ENCODE measurements at regions of chr4 and their contacts with region 1.

Region 1: DNA sequence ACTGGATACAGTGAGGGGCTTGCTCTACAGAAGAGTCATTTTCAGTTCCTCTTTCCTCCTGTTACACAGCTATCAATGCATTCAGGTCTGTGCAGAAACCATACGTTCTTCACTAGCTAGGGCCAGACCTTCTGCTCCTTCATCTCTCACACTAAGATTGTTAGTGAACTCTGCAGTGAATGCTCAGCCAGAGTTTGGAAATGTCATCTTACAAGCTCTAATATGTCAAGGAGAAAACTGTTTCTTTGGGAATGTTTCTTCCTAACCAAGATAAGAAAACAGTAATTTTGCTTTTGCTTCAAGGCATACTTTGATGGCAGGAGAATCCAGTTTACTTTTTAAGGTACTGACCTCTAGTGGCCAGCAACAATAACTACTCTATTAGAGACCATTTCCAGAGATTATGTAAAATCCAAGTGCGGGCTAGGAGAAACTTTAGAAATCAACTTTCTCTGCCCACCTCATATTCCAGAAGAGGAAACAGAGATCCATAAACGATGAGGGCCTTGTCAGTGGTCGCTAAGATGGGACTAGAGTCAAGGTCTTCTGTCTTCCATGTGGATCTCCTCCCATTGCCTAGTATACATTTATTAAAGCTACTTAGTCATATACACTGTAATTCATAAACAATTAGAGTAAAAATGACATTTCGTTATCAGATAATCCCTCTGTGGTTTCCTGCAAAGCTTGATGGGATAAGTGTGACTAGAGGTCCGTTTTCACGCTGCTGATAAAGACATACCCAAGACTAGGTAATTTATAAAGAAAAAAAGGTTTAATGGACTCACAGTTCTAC is 12.1 kb upstream of the CC2D2A start:
- DNase-seq: no peak
- H3K4me3 ChIP-seq: no peak overlapping the region
- H3K27ac ChIP-seq: no peak overlapping the region
- H3K4me1 ChIP-seq: peaks cover 4% of the 10 kb centered on the region
- H3K27me3 ChIP-seq: peaks cover 2% of the 10 kb centered on the region
- CTCF ChIP-seq: peak; percentile 66 to 72

Region 2: GRCh38 chr4:15231265-15232091 is 226.1 kb before region 1 on chr4:
- CTCF ChIA-PET with region 1: no interaction called
- dilution Hi-C with region 1: loop called (anchors 25 kb)
- in situ Hi-C with region 1: loop called (anchors 5 kb)
- intact Hi-C with region 1: loop called (anchors 2 kb)
- DNase-seq: peak; percentile 68
- H3K4me3 ChIP-seq: no peak overlapping the region
- H3K27ac ChIP-seq: no peak overlapping the region
- H3K4me1 ChIP-seq: peaks cover 30% of the 10 kb centered on the region
- H3K27me3 ChIP-seq: peaks cover 2% of the 10 kb centered on the region
- CTCF ChIP-seq: peak; percentile 69 to 76

Region 3: DNA sequence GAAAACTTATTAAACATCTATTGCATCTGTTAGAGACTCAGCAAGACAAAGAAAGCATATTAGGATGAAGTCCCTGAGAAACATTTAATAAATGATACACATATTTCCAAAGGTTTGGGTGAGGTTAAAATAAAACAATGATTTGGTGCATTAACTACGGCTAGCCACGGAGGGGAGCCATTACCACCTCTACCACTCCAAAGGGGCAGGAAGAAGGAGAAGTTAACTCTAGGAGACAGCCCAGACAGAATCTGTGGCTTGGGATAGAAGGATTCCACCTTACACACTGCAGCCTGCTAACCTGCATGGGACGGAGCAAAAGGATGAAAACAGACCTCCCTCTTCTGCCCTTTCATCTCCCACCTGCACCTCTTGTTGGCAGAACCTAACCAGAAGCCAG is 218.9 kb before region 1 on chr4:
- CTCF ChIA-PET with region 1: interaction called, 3 read pairs
- dilution Hi-C with region 1: loop called (anchors 25 kb)
- in situ Hi-C with region 1: loop called (anchors 5 kb)
- intact Hi-C with region 1: loop called (anchors 1 kb)
- DNase-seq: peak; percentile 25
- H3K4me3 ChIP-seq: no peak overlapping the region
- H3K27ac ChIP-seq: no peak overlapping the region
- H3K4me1 ChIP-seq: peaks cover 13% of the 10 kb centered on the region
- H3K27me3 ChIP-seq: no peaks in the 10 kb centered on the region
- CTCF ChIP-seq: peak; percentile 68 to 79

Region 4: GRCh38 chr4:15327311-15328298 is 130.0 kb before region 1 on chr4:
- CTCF ChIA-PET with region 1: no interaction called
- dilution Hi-C with region 1: no loop called
- in situ Hi-C with region 1: no loop called
- intact Hi-C with region 1: loop called (anchors 1 kb)
- DNase-seq: no peak
- H3K4me3 ChIP-seq: no peak overlapping the region
- H3K27ac ChIP-seq: no peak overlapping the region
- H3K4me1 ChIP-seq: no peaks in the 10 kb centered on the region
- H3K27me3 ChIP-seq: no peaks in the 10 kb centered on the region
- CTCF ChIP-seq: peak in 1 of 2 donors; percentile 12

Measured in mammary epithelial cell (primary cell).